ENCODE measurements at regions of chr17 and their contacts with region 1.

Region 1: DNA sequence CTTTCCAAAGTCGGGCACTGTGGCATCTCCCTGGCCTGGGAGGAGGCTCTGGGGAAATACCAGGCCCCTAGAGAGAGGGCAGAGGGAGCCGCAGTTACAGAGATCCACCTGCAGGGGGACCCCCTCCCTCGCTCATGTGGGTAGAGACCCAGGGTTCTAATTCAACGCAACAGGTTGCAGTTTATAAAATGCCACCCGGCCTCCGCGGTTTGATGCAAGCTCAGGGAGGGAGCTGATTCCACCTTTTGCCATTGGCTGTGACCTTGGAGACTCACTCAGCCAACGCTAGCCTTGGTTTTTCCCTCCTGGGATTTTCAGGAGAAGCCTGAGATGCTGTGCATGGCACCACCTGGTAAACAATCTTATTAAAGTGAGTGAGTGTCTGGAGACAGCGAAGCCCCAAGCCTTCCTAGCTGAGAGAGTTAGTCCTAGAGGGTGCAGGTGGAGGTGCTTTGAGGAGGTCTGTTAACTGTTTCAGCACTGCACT is 12.1 kb downstream of the TTLL6 start:
- DNase-seq: peak; percentile 83
- CTCF ChIP-seq: peak; percentile 92

Region 2: DNA sequence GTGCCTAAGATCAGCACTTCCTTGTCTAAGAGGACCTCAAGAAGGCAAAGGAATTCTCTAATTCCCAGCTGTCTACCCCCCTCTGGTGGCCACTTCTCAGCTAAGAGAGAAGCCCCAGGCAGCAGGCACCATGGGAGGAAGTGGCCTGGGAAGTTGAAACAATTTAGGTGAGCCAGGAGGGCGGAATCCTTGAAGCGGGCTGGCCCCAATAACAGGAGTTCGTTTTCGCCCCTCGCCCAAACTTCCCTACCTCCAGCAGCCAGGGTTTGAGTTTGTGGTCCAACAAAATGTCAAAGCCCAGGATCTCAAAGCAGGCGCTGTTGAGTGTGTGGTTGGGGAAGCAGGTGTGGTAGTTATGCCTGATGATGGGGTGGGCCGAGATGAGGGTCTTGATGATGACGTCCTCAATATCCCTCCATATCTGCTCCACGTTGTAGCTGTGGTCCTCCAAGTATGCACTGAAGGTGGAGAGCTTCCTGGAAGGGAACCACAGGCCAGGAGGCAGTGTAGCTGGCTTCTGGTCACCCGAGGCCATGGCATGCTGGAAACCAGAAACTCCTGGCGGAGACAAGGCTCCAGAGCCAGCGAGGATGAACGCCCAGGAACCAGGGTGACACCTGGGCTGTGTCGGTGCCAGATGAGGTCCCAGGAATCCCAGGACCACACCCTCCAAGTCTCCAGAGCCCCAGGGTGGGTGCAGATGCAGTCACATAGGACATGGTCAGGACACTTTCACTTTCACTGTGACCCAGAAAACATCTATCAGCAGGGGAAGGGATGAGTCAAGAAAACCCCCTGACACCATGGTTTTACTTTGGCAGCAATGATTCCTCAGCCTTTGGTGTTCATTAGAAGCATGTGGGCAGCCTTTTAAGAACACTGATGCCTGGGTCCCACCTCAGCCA is 13.6 kb before region 1 on chr17:
- CTCF ChIA-PET with region 1: interaction called, 79 read pairs
- POLR2A ChIA-PET with region 1: no interaction called
- DNase-seq: peak; percentile 70
- CTCF ChIP-seq: peak; percentile 62

Region 3: DNA sequence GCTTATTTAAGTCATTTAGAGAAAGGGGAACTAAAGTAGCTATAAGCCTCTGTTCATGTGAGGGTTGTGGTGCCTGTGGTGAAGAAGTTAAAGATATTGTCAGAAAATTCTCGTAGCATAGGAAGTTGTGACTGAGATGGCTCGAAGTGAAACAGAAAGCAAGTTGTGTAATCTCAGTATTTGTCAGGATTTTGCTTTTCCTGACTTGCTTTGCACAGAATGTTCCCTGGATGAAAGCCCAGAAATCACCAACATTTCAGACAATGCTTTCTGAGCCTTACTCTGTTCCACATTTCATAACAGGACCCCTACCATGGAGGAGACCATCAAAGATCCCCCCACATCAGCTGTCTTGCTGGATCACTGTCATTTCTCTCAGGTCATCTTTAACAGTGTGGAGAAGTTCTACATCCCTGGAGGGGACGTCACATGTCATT is 36.4 kb after region 1 on chr17:
- CTCF ChIA-PET with region 1: interaction called, 13 read pairs
- POLR2A ChIA-PET with region 1: no interaction called
- DNase-seq: peak; percentile 72
- CTCF ChIP-seq: no peak

Region 4: GRCh38 chr17:48860034-48860433 is 55.1 kb after region 1 on chr17:
- CTCF ChIA-PET with region 1: interaction called, 12 read pairs
- POLR2A ChIA-PET with region 1: no interaction called
- DNase-seq: no peak
- CTCF ChIP-seq: no peak